ENCODE measurements at regions of chr17 and their contacts with region 1.

Region 1: DNA sequence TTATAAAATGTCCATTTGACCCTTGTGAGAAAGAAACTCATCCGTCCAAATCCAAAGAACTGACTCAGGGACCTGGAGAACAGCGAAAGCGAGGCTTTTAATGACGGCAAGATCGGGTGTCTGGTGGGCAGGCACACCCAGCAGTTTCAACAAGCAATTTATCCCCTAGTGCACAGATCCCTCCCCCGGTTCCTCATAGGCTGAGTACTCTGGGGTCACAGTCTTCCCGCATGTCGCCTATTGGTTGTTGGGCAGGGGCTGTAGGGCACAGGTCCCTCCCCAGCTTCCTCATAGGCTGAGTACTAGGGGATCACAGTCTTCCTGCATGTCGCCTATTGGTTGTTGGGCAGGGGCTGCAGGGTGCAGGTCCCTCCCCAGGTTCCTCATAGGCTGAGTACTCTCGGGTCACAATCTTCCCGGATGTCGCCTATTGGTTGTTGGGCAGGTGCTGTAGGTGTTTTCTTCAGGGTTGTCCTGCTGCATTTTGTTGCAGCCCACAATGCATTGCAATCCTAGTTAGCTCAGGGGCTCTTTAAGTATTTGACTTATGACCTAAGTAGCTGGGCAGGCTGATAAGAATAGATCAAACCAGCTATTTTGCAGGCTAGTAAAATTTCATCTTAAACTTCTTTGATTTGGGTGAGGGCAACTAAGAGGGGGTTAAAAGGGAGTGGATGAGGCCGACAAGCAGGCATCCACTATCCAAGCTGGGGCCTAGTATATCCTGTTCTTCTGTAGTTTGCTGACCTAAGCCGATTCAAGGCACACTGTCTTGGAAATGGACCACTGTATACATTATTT is 3.6 kb upstream of the UTS2R start:
- DNase-seq: peak in 1 of 3 donors; percentile 51
- H3K4me3 ChIP-seq: no peak overlapping the region
- H3K27ac ChIP-seq: peak overlapping the region in 1 of 2 experiments; percentile 54
- H3K4me1 ChIP-seq: peaks cover 0 to 26% (median 22%) of the 10 kb centered on the region in 4 experiments
- H3K27me3 ChIP-seq: peaks cover 7 to 53% (median 23%) of the 10 kb centered on the region in 5 experiments

Region 2: DNA sequence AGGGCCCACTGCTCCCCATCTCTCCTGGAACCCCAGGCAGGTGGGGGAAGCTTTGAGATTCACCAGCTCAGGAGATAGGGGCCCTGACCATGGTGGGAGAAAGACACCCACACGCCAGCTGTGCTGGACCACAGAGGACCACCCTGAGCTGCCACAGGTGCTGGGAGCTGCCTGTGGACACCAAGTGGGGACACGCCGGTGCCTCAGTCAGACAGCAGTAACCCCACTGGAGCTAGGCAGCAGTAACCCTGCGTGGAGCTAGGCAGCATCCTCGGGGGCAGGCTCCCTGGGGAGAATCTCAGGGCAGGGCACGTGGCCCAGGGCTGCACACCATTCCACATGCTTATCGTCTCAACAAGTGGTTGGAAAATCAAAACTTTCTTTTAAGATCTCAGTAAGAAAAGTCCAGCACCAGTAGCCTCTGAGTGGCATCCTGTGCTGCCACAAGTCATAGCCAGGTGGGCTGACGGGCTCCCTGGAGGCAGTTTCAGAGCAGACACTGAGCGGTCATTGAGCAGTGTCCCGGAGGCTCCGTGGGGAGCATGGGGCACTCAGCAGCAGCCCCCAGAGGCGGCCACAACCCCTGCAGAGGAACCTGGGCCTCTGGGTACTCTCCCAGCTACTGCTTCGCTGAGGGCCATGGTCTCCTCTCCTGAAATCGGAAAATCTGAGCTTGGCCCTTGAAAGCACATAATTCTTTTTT is 42.2 kb after region 1 on chr17:
- CTCF ChIA-PET with region 1: interaction called, 5 read pairs
- POLR2A ChIA-PET with region 1: interaction called, 10 read pairs
- DNase-seq: no peak
- H3K4me3 ChIP-seq: no peak overlapping the region
- H3K27ac ChIP-seq: no peak overlapping the region
- H3K4me1 ChIP-seq: peaks cover 0 to 14% (median 10%) of the 10 kb centered on the region in 4 experiments
- H3K27me3 ChIP-seq: no peaks in the 10 kb centered on the region

Measured in common myeloid progenitor, CD34-positive (primary cell).